ENCODE measurements at regions of chr2 and their contacts with region 1.

Region 1: GRCh38 chr2:197209742-197210408 is 100.7 kb downstream of the ANKRD44 start:
- DNase-seq: peak in 7 of 9 experiments; percentile 22 to 73 (median 48)
- ATAC-seq: peak; percentile 10
- H3K4me3 ChIP-seq: peak overlapping the region in 1 of 2 experiments; percentile 11
- H3K4me3 Mint-ChIP-seq: peak overlapping the region; percentile 54
- H3K27ac ChIP-seq: peak overlapping the region; percentile 24 to 73
- H3K27ac Mint-ChIP-seq: peak overlapping the region; percentile 100
- H3K4me1 ChIP-seq: peaks cover 99% of the 10 kb centered on the region
- H3K4me1 Mint-ChIP-seq: peaks cover 97% of the 10 kb centered on the region
- H3K27me3 ChIP-seq: no peaks in the 10 kb centered on the region
- H3K27me3 Mint-ChIP-seq: no peaks in the 10 kb centered on the region
- CTCF ChIP-seq: no peak

Region 2: DNA sequence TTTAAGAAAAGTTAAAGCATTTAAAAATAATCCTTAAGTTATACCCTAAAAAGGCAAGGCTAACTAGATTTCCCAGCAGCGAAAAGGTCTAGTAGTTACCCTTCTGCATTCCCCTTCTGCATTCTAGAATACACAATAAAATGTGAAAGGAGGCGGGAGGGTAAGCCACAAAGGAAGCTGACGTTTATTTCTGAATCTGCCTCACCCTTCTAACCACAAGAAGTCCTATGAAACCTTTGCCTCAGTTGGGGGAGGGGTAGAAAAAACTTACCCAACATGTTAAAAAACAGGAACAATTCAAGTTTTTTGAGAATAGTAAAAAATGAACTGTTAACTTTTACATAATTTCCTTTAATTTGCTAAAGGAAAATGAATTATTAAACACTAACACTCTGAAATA is 1049.8 kb before region 1 on chr2:
- CTCF ChIA-PET with region 1: no interaction called
- POLR2A ChIA-PET with region 1: interaction called, 3 read pairs
- intact Hi-C with region 1: loop called in 1 of 2 experiments (anchors 10 kb)
- DNase-seq: peak in 7 of 9 experiments; percentile 49 to 94 (median 69)
- ATAC-seq: peak; percentile 46
- H3K4me3 ChIP-seq: peak overlapping the region; percentile 22 to 45
- H3K4me3 Mint-ChIP-seq: peak overlapping the region; percentile 58
- H3K27ac ChIP-seq: peak overlapping the region; percentile 75 to 91
- H3K27ac Mint-ChIP-seq: peak overlapping the region; percentile 73
- H3K4me1 ChIP-seq: peaks cover 86% of the 10 kb centered on the region
- H3K4me1 Mint-ChIP-seq: peaks cover 82% of the 10 kb centered on the region
- H3K27me3 ChIP-seq: no peaks in the 10 kb centered on the region
- H3K27me3 Mint-ChIP-seq: no peaks in the 10 kb centered on the region
- CTCF ChIP-seq: no peak

Region 3: DNA sequence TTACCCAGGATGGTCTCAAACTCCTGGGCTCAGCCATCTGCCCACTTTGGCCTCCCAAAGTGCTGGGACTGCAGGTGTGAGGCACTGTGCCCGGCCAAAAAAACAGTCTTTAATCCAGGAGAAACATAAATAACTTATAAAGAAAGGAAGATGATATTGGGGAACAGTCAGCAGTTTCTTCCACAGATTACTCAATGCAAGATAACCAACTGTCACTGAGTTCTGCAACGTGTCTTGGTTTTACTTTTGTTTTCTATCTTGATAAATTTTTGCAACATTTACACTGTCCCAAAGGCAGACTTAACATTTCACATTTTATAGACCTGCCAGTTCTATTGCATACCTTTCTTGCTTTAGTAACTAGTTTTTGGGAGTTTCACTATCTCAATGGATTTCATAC is 29.6 kb after region 1 on chr2:
- CTCF ChIA-PET with region 1: interaction called, 16 read pairs
- POLR2A ChIA-PET with region 1: interaction called, 7 read pairs
- intact Hi-C with region 1: loop called in 1 of 2 experiments (anchors 2 kb)
- DNase-seq: peak in 2 of 9 experiments; percentile 36 to 62
- ATAC-seq: peak; percentile 41
- H3K4me3 ChIP-seq: peak overlapping the region; percentile 38 to 41
- H3K4me3 Mint-ChIP-seq: peak overlapping the region; percentile 84
- H3K27ac ChIP-seq: peak overlapping the region; percentile 39 to 89
- H3K27ac Mint-ChIP-seq: peak overlapping the region; percentile 96
- H3K4me1 ChIP-seq: peaks cover 88% of the 10 kb centered on the region
- H3K4me1 Mint-ChIP-seq: peaks cover 87% of the 10 kb centered on the region
- H3K27me3 ChIP-seq: no peaks in the 10 kb centered on the region
- H3K27me3 Mint-ChIP-seq: no peaks in the 10 kb centered on the region
- CTCF ChIP-seq: no peak

Region 4: GRCh38 chr2:197248623-197249022 is 38.7 kb after region 1 on chr2:
- CTCF ChIA-PET with region 1: no interaction called
- POLR2A ChIA-PET with region 1: interaction called, 6 read pairs
- intact Hi-C with region 1: loop called in 1 of 2 experiments (anchors 5 kb)
- DNase-seq: peak in 4 of 9 experiments; percentile 31 to 70 (median 57)
- ATAC-seq: peak; percentile 74
- H3K4me3 ChIP-seq: no peak overlapping the region
- H3K4me3 Mint-ChIP-seq: peak overlapping the region; percentile 65
- H3K27ac ChIP-seq: peak overlapping the region in 1 of 2 experiments; percentile 50
- H3K27ac Mint-ChIP-seq: peak overlapping the region; percentile 89
- H3K4me1 ChIP-seq: peaks cover 83% of the 10 kb centered on the region
- H3K4me1 Mint-ChIP-seq: peaks cover 89% of the 10 kb centered on the region
- H3K27me3 ChIP-seq: no peaks in the 10 kb centered on the region
- H3K27me3 Mint-ChIP-seq: no peaks in the 10 kb centered on the region
- CTCF ChIP-seq: no peak

Region 5: GRCh38 chr2:197261808-197262226 is 51.9 kb after region 1 on chr2:
- CTCF ChIA-PET with region 1: interaction called, 4 read pairs
- POLR2A ChIA-PET with region 1: interaction called, 10 read pairs
- intact Hi-C with region 1: loop called in 1 of 2 experiments (anchors 2 kb)
- DNase-seq: peak in 2 of 9 experiments; percentile 39 to 55
- ATAC-seq: peak; percentile 39
- H3K4me3 ChIP-seq: peak overlapping the region in 1 of 2 experiments; percentile 20
- H3K4me3 Mint-ChIP-seq: peak overlapping the region; percentile 30
- H3K27ac ChIP-seq: peak overlapping the region; percentile 36 to 73
- H3K27ac Mint-ChIP-seq: peak overlapping the region; percentile 89
- H3K4me1 ChIP-seq: peaks cover 81% of the 10 kb centered on the region
- H3K4me1 Mint-ChIP-seq: peaks cover 81% of the 10 kb centered on the region
- H3K27me3 ChIP-seq: no peaks in the 10 kb centered on the region
- H3K27me3 Mint-ChIP-seq: no peaks in the 10 kb centered on the region
- CTCF ChIP-seq: no peak

Region 6: DNA sequence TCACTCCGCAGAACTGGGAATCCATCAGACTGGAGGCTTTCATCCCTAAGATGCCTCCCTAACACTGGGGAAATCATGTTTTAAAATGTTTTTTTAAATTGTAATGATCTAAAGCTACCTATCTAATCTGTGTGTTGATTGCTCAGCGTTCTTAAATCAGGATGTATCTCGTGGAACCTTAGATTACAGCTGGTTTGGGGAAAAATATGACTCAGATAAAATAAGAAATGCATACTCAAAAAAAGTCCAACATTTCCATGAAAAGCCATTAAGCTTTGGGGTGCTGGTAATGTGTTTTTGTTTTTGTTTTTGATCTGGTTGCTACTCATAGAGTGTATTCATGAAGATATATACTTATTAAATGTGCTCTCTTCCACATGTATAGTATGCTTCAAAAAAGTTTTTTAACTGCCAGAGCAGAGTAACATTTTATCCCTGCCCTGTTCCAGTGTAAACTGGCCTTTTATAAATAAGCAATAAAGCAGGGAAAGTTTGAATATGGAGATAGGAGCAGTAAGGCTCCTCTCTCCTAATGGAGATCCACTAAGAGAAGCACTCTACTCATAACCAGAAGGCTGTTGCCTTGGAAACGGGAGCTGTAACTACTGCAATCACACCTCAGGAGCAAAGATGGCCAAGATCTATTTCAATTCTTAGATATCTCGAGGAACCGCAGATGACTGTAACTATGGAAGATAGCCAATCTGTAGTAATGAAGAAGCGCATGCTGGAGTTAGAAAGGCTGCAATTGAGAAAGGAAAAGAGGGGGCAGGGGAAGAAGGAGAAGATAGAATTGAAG is 59.1 kb after region 1 on chr2:
- CTCF ChIA-PET with region 1: interaction called, 4 read pairs
- POLR2A ChIA-PET with region 1: interaction called, 3 read pairs
- intact Hi-C with region 1: loop called in 1 of 2 experiments (anchors 2 kb)
- DNase-seq: peak in 3 of 9 experiments; percentile 32 to 80 (median 64)
- ATAC-seq: peak; percentile 35
- H3K4me3 ChIP-seq: no peak overlapping the region
- H3K4me3 Mint-ChIP-seq: peak overlapping the region; percentile 21
- H3K27ac ChIP-seq: peak overlapping the region; percentile 30 to 73
- H3K27ac Mint-ChIP-seq: peak overlapping the region; percentile 89
- H3K4me1 ChIP-seq: peaks cover 89% of the 10 kb centered on the region
- H3K4me1 Mint-ChIP-seq: peaks cover 95% of the 10 kb centered on the region
- H3K27me3 ChIP-seq: no peaks in the 10 kb centered on the region
- H3K27me3 Mint-ChIP-seq: no peaks in the 10 kb centered on the region
- CTCF ChIP-seq: no peak

Region 7: GRCh38 chr2:197515739-197516392 is 306.0 kb after region 1 on chr2 and contains the start of gene MOB4:
- CTCF ChIA-PET with region 1: no interaction called
- POLR2A ChIA-PET with region 1: no interaction called
- intact Hi-C with region 1: loop called in 1 of 2 experiments (anchors 10 kb)
- DNase-seq: peak; percentile 90 to 97 (median 93)
- ATAC-seq: peak; percentile 90
- H3K4me3 ChIP-seq: peak within 1 kb of the TSS; percentile 73 to 94
- H3K4me3 Mint-ChIP-seq: peak within 1 kb of the TSS; percentile 92
- H3K27ac ChIP-seq: peak within 1 kb of the TSS; percentile 88 to 99
- H3K27ac Mint-ChIP-seq: peak within 1 kb of the TSS; percentile 93
- H3K4me1 ChIP-seq: peaks cover 22% of the 10 kb centered on the region
- H3K4me1 Mint-ChIP-seq: peaks cover 44% of the 10 kb centered on the region
- H3K27me3 ChIP-seq: no peaks in the 10 kb centered on the region
- H3K27me3 Mint-ChIP-seq: no peaks in the 10 kb centered on the region
- CTCF ChIP-seq: no peak
- total RNA-seq, gene MOB4: 32.1 to 36.5 TPM